ENCODE measurements at regions of chrX and their contacts with region 1.

Region 1: GRCh38 chrX:45070116-45071007 is 130.3 kb downstream of the DIPK2B start:
- DNase-seq: peak; percentile 51
- ATAC-seq: peak; percentile 43
- H3K4me3 ChIP-seq: no peak overlapping the region
- H3K4me3 Mint-ChIP-seq: no peak overlapping the region
- H3K27ac ChIP-seq: peak overlapping the region in 1 of 2 donors; percentile 44
- H3K27ac Mint-ChIP-seq: peak overlapping the region; percentile 56
- H3K4me1 ChIP-seq: peaks cover 16 to 28% of the 10 kb centered on the region in 2 donors
- H3K4me1 Mint-ChIP-seq: peaks cover 37% of the 10 kb centered on the region
- H3K27me3 ChIP-seq: no peaks in the 10 kb centered on the region
- H3K27me3 Mint-ChIP-seq: no peaks in the 10 kb centered on the region
- CTCF ChIP-seq: peak; percentile 58

Region 2: DNA sequence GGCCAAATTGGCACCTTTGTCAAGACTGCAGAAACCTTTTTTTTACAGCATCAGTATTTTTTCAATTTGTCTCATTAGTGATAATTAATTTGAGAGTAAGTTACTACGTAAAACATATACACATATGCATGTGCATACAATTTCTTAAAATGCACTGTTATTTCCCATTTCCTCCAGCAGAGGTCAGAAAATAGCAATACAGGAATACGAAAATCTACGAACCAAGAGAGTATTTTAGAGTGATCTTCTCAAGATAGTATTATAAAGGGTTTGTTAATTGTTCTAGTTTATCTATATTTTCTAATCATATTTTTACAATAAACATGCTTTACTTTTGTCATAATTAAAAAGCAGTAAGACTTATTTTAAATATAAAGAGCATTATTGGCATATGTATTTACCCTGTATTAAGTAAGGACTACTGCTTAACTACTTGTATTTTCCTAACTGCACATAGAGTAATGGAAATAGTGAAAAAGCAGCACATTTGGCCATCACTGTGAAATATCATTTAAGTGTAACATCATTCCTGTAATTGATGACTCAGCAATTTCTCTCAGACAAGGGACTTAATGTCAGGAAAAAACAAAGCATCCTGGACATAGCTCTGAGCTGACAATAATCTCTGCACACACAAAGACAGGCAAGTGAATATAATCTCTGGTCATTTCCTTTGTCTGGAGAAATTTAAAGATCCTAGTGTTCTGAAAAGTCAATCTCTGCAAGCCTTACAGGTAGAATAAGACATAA is 1233.8 kb before region 1 on chrX:
- CTCF ChIA-PET with region 1: no interaction called
- POLR2A ChIA-PET with region 1: no interaction called
- intact Hi-C with region 1: loop called (anchors 5 kb)
- DNase-seq: peak; percentile 16
- ATAC-seq: no peak
- H3K4me3 ChIP-seq: no peak overlapping the region
- H3K4me3 Mint-ChIP-seq: no peak overlapping the region
- H3K27ac ChIP-seq: no peak overlapping the region
- H3K27ac Mint-ChIP-seq: no peak overlapping the region
- H3K4me1 ChIP-seq: no peaks in the 10 kb centered on the region
- H3K4me1 Mint-ChIP-seq: no peaks in the 10 kb centered on the region
- H3K27me3 ChIP-seq: no peaks in the 10 kb centered on the region
- H3K27me3 Mint-ChIP-seq: peaks cover 3% of the 10 kb centered on the region
- CTCF ChIP-seq: peak; percentile 72

Region 3: DNA sequence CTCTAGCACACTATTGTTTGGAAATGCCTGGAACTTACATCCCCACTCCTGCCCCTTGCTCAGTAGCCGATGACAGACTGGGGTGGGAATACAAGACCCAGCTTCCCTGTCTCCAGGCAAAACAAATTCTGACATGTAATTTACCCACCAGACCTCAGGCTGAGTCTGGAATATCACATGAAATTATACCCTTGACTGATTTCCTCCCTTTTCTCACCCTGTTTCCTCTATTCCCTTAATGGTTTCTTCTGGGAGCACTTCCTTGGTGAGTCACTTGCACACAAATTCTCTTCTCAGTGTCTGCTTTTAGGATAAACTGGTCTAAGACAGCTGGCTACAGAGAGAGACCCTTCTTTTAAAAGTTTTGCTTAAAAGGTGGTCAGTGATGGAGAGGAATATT is 196.1 kb after region 1 on chrX:
- CTCF ChIA-PET with region 1: no interaction called
- POLR2A ChIA-PET with region 1: no interaction called
- intact Hi-C with region 1: no loop called
- DNase-seq: no peak
- ATAC-seq: no peak
- H3K4me3 ChIP-seq: no peak overlapping the region
- H3K4me3 Mint-ChIP-seq: no peak overlapping the region
- H3K27ac ChIP-seq: no peak overlapping the region
- H3K27ac Mint-ChIP-seq: no peak overlapping the region
- H3K4me1 ChIP-seq: no peaks in the 10 kb centered on the region
- H3K4me1 Mint-ChIP-seq: no peaks in the 10 kb centered on the region
- H3K27me3 ChIP-seq: no peaks in the 10 kb centered on the region
- H3K27me3 Mint-ChIP-seq: no peaks in the 10 kb centered on the region
- CTCF ChIP-seq: no peak

Region 4: DNA sequence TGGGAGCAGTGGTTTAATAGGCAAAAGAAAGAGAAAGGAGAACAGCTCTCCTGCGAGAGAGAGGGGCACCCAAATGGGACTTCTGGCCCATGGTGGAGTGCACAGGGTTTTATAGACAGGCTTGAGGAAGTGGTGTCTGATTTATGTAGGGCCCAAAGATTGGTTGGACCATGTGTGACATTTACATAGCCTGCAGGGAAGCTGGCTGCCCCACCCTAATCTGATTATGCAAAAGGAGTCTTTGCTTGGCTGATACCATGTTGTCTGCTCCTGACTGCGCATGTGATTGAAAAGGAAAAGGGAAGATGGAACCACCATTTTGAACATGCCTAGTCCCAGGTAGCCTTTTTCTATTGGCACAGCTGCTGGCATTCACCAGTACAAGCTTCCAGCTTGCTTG is 230.3 kb after region 1 on chrX:
- CTCF ChIA-PET with region 1: no interaction called
- POLR2A ChIA-PET with region 1: no interaction called
- intact Hi-C with region 1: no loop called
- DNase-seq: no peak
- ATAC-seq: no peak
- H3K4me3 ChIP-seq: no peak overlapping the region
- H3K4me3 Mint-ChIP-seq: no peak overlapping the region
- H3K27ac ChIP-seq: no peak overlapping the region
- H3K27ac Mint-ChIP-seq: no peak overlapping the region
- H3K4me1 ChIP-seq: no peaks in the 10 kb centered on the region
- H3K4me1 Mint-ChIP-seq: no peaks in the 10 kb centered on the region
- H3K27me3 ChIP-seq: no peaks in the 10 kb centered on the region
- H3K27me3 Mint-ChIP-seq: peaks cover 4% of the 10 kb centered on the region
- CTCF ChIP-seq: no peak

Measured in B cell (primary cell).